ENCODE measurements at regions of chr9 and their contacts with region 1.

Region 1: GRCh38 chr9:98056269-98057137 is at the start of gene NANS:
- DNase-seq: peak; percentile 84 to 93 (median 91)
- ATAC-seq: peak; percentile 99
- H3K4me3 ChIP-seq: peak within 1 kb of the TSS; percentile 73
- H3K4me3 Mint-ChIP-seq: peak within 1 kb of the TSS; percentile 93 to 100 (median 95)
- H3K27ac ChIP-seq: peak within 1 kb of the TSS; percentile 93
- H3K27ac Mint-ChIP-seq: peak within 1 kb of the TSS; percentile 93 to 100 (median 97)
- H3K4me1 ChIP-seq: peaks cover 9 to 22% of the 10 kb centered on the region in 2 donors
- H3K4me1 Mint-ChIP-seq: peaks cover 6 to 40% (median 27%) of the 10 kb centered on the region in 7 donors
- H3K27me3 ChIP-seq: no peaks in the 10 kb centered on the region
- H3K27me3 Mint-ChIP-seq: no peaks in the 10 kb centered on the region
- total RNA-seq, gene NANS: 16.3 to 58.9 (median 51.8) TPM

Region 2: GRCh38 chr9:97975376-97975775 is 81.1 kb before region 1 on chr9:
- CTCF ChIA-PET with region 1: no interaction called
- POLR2A ChIA-PET with region 1: no interaction called
- intact Hi-C with region 1: no loop called
- DNase-seq: no peak
- ATAC-seq: no peak
- H3K4me3 ChIP-seq: no peak overlapping the region
- H3K4me3 Mint-ChIP-seq: no peak overlapping the region
- H3K27ac ChIP-seq: no peak overlapping the region
- H3K27ac Mint-ChIP-seq: no peak overlapping the region
- H3K4me1 ChIP-seq: peaks cover 0 to 7% of the 10 kb centered on the region in 2 donors
- H3K4me1 Mint-ChIP-seq: peaks cover 10 to 30% (median 22%) of the 10 kb centered on the region in 7 donors
- H3K27me3 ChIP-seq: no peaks in the 10 kb centered on the region
- H3K27me3 Mint-ChIP-seq: peaks cover 0 to 23% (median 0%) of the 10 kb centered on the region in 5 donors

Region 3: DNA sequence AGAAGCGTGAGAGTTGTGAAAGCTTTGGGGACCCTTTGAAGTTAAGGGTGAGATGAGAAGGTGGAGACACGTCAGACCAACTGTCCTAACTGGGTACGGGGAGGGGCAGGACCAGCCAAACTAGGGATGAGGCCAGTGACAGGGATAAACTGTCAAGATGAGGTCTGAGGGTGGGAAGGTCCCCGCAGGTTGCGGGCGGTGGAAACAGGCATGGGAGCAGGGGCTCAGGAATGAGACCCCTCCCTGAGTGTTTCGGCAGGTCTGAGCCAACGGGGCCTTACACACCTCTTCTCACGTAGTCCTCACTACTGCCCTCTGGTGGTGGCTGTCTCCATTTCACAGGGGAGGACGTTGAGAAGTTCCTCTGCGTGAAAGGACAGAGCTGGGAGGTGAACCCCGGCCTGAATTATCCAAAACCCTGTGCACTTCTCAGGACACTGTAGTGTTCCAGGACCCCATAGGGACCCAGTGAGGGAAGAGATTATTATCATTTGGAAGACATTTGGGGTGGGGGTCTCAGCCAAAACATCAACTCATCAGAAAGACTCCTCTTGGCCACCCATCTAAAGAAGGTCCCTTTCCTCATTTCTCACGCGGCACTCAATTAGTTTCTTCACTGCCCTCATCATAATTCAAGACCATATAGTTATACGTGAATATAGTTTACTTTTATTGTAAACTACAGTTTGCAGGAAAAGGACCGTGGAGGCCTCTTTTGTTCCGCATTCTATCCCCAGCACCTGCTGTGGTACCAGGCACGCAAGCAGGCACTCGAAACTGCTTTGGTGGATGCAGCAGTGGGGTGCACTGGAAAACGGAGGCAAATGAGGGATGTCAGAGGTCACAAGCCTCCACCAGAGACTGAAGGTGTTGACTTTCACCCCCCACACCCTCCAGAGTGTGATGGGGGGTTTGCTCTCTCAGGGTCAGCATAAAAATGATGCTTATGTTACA is 21.6 kb before region 1 on chr9:
- CTCF ChIA-PET with region 1: interaction called, 4 read pairs
- POLR2A ChIA-PET with region 1: interaction called, 5 read pairs
- intact Hi-C with region 1: loop called in 1 of 2 experiments (anchors 1 kb)
- DNase-seq: peak; percentile 76 to 92 (median 86)
- ATAC-seq: peak; percentile 99
- H3K4me3 ChIP-seq: no peak overlapping the region
- H3K4me3 Mint-ChIP-seq: peak overlapping the region in 8 of 10 donors; percentile 11 to 63 (median 41)
- H3K27ac ChIP-seq: no peak overlapping the region
- H3K27ac Mint-ChIP-seq: peak overlapping the region in 8 of 9 donors; percentile 9 to 87 (median 66)
- H3K4me1 ChIP-seq: peaks cover 0 to 4% of the 10 kb centered on the region in 2 donors
- H3K4me1 Mint-ChIP-seq: peaks cover 5 to 12% (median 8%) of the 10 kb centered on the region in 7 donors
- H3K27me3 ChIP-seq: no peaks in the 10 kb centered on the region
- H3K27me3 Mint-ChIP-seq: peaks cover 0 to 8% (median 0%) of the 10 kb centered on the region in 5 donors

Region 4: GRCh38 chr9:98045234-98046179 is 11.0 kb before region 1 on chr9:
- CTCF ChIA-PET with region 1: interaction called, 7 read pairs
- POLR2A ChIA-PET with region 1: interaction called, 14 read pairs
- intact Hi-C with region 1: loop called (anchors 1 kb)
- DNase-seq: peak in 8 of 9 donors; percentile 27 to 83 (median 72)
- ATAC-seq: peak; percentile 96
- H3K4me3 ChIP-seq: peak overlapping the region; percentile 59
- H3K4me3 Mint-ChIP-seq: peak overlapping the region; percentile 77 to 95 (median 86)
- H3K27ac ChIP-seq: peak overlapping the region; percentile 49
- H3K27ac Mint-ChIP-seq: peak overlapping the region; percentile 85 to 99 (median 89)
- H3K4me1 ChIP-seq: peaks cover 0 to 8% of the 10 kb centered on the region in 2 donors
- H3K4me1 Mint-ChIP-seq: peaks cover 8 to 51% (median 41%) of the 10 kb centered on the region in 7 donors
- H3K27me3 ChIP-seq: no peaks in the 10 kb centered on the region
- H3K27me3 Mint-ChIP-seq: peaks cover 0 to 5% (median 0%) of the 10 kb centered on the region in 5 donors

Region 5: DNA sequence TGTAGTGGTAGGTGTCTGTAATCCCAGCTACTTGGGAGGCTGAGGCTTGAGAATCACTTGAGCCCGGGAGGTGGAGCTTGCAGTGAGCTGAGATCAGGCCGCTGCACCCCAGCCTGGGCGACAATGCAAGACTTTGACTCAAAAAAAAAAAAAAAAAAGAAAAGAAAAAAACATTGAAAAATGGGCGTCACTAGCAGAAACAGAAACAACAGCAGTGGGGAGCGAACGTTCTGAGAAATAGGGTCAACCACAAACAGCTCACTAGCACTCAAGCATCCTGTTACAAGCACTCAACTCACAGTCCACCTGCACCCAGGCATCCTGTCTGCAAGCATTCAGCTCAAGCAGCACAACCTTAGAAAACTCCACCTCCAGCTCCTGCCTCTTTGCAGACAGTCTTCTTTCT is 45.4 kb after region 1 on chr9:
- CTCF ChIA-PET with region 1: interaction called, 4 read pairs
- POLR2A ChIA-PET with region 1: interaction called, 6 read pairs
- intact Hi-C with region 1: loop called (anchors 1 kb)
- DNase-seq: peak; percentile 35 to 96 (median 92)
- ATAC-seq: peak; percentile 99
- H3K4me3 ChIP-seq: peak overlapping the region; percentile 31
- H3K4me3 Mint-ChIP-seq: peak overlapping the region; percentile 66 to 86 (median 77)
- H3K27ac ChIP-seq: peak overlapping the region; percentile 78
- H3K27ac Mint-ChIP-seq: peak overlapping the region; percentile 87 to 99 (median 95)
- H3K4me1 ChIP-seq: peaks cover 88 to 91% of the 10 kb centered on the region in 2 donors
- H3K4me1 Mint-ChIP-seq: peaks cover 52 to 97% (median 88%) of the 10 kb centered on the region in 7 donors
- H3K27me3 ChIP-seq: no peaks in the 10 kb centered on the region
- H3K27me3 Mint-ChIP-seq: no peaks in the 10 kb centered on the region

Region 6: DNA sequence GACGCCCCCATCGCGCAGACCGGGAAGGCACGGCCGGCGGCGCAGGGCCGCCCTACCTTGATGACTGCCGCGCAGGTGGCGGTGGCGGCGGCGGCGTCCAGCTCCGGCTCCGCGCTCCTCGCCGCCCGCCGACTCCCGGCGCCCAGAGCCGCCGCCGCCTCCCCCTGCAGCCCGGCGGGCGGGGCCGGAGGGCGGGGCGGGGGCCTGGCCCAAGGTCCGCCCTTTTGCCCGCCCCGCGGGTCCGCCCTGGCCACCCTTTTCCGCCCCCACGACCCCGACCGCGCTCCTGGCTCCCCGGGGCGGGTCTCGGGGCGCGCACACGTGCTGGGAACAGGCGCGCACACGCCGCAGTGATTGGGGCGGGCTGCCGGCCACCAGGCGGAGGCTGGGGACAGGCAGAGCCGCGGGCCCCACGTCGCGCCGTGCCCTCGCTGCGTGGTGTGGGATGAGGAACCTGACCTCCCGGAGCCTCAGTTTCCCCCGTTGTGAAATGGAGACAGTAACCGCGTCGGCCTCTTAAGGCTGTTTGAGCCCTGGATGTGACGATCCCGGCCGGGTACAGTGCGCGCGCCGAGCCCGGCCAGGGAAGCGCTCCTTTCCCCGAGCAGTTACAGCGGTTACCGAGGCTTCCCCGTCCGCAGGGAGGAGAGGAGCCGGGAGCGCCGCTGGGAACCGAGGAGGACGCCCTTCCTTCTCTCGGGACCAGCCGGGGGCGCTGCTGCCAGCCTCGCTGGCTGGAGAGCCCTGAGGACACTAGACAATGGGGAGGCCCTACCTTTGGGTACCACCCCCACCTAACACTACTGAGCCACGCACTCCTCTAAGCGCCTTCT is 136.2 kb after region 1 on chr9 and contains the start of gene CORO2A:
- CTCF ChIA-PET with region 1: no interaction called
- POLR2A ChIA-PET with region 1: no interaction called
- intact Hi-C with region 1: loop called in 1 of 2 experiments (anchors 2 kb)
- DNase-seq: peak; percentile 37 to 85 (median 47)
- ATAC-seq: peak; percentile 86
- H3K4me3 ChIP-seq: peak within 1 kb of the TSS; percentile 81
- H3K4me3 Mint-ChIP-seq: peak within 1 kb of the TSS; percentile 76 to 92 (median 86)
- H3K27ac ChIP-seq: peak within 1 kb of the TSS; percentile 53
- H3K27ac Mint-ChIP-seq: peak within 1 kb of the TSS; percentile 19 to 90 (median 83)
- H3K4me1 ChIP-seq: peaks cover 17 to 22% of the 10 kb centered on the region in 2 donors
- H3K4me1 Mint-ChIP-seq: peaks cover 12 to 46% (median 41%) of the 10 kb centered on the region in 7 donors
- H3K27me3 ChIP-seq: no peaks in the 10 kb centered on the region
- H3K27me3 Mint-ChIP-seq: peaks cover 0 to 17% (median 0%) of the 10 kb centered on the region in 5 donors
- total RNA-seq, gene CORO2A: 3.0 to 9.7 (median 7.7) TPM

Region 7: GRCh38 chr9:98263482-98264357 is 207.2 kb after region 1 on chr9:
- CTCF ChIA-PET with region 1: no interaction called
- POLR2A ChIA-PET with region 1: interaction called, 6 read pairs
- intact Hi-C with region 1: loop called in 1 of 2 experiments (anchors 1 kb)
- DNase-seq: peak; percentile 54 to 82 (median 77)
- ATAC-seq: peak; percentile 100
- H3K4me3 ChIP-seq: no peak overlapping the region
- H3K4me3 Mint-ChIP-seq: no peak overlapping the region
- H3K27ac ChIP-seq: no peak overlapping the region
- H3K27ac Mint-ChIP-seq: peak overlapping the region in 1 of 9 donors; percentile 59
- H3K4me1 ChIP-seq: no peaks in the 10 kb centered on the region
- H3K4me1 Mint-ChIP-seq: peaks cover 0 to 3% (median 0%) of the 10 kb centered on the region in 7 donors
- H3K27me3 ChIP-seq: no peaks in the 10 kb centered on the region
- H3K27me3 Mint-ChIP-seq: peaks cover 0 to 23% (median 0%) of the 10 kb centered on the region in 5 donors

Measured in naive thymus-derived CD4-positive, alpha-beta T cell (primary cell).